Colonic mucosa (tissue), 4 donors: ENCODE measurements at regions of chr1 and their contacts with region 1.

Region 1: DNA sequence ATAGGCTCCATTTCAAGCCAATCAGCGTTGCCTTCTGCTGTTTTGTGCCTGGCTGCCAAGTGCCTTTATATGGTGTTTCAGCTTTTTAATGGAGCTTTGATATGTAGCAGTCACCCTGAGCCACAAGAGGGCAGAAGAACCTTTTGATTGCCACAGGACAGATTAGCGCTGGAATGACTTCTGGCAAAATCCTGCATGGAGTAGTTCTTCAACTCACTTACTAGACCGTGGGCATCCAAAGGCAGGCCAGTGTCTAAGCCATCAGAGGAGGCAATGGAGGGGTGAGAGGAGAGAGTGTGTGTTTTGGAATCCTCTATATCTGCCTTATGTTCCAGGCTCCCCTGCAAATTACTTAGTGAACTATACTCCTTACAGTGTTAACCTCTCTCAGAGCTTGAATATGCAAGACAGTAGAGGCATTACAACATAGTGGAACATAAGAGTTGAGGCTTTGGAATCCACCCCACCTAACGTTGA is 56.2 kb downstream of the ST3GAL3 start:
- DNase-seq: peak; percentile 80
- H3K4me3 ChIP-seq: no peak overlapping the region
- H3K27ac ChIP-seq: no peak overlapping the region
- H3K4me1 ChIP-seq: no peaks in the 10 kb centered on the region
- H3K27me3 ChIP-seq: no peaks in the 10 kb centered on the region
- CTCF ChIP-seq: peak; percentile 67

Region 2: DNA sequence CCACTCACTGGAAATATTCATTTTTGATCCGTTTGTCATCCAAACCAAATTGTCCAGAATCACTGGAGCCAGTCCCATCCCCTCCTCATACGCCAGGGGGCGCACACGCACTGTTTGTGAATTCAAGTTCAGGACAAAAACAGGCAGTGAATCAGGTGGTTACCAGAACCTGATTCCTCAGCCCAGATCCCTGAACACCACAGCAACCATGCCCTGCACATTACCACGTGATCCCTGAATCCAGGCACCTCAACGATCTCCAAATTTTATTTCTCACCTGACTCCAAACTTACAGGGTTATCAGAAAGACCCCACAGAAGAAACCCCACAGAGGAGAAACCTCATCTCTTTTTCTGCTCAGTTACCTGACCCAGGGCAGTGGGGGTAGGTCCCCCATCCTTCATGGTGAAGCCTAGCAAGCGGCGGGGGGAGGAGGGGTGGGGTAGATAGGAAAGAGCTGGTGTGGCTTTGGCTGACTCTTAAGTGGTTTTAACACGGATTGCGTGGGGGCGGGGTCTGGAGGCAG is 234.3 kb before region 1 on chr1:
- intact Hi-C with region 1: loop called (anchors 5 kb)
- DNase-seq: peak; percentile 93
- H3K4me3 ChIP-seq: no peak overlapping the region
- H3K27ac ChIP-seq: no peak overlapping the region
- H3K4me1 ChIP-seq: peaks cover 3% of the 10 kb centered on the region
- H3K27me3 ChIP-seq: no peaks in the 10 kb centered on the region
- CTCF ChIP-seq: peak; percentile 98

Region 3: DNA sequence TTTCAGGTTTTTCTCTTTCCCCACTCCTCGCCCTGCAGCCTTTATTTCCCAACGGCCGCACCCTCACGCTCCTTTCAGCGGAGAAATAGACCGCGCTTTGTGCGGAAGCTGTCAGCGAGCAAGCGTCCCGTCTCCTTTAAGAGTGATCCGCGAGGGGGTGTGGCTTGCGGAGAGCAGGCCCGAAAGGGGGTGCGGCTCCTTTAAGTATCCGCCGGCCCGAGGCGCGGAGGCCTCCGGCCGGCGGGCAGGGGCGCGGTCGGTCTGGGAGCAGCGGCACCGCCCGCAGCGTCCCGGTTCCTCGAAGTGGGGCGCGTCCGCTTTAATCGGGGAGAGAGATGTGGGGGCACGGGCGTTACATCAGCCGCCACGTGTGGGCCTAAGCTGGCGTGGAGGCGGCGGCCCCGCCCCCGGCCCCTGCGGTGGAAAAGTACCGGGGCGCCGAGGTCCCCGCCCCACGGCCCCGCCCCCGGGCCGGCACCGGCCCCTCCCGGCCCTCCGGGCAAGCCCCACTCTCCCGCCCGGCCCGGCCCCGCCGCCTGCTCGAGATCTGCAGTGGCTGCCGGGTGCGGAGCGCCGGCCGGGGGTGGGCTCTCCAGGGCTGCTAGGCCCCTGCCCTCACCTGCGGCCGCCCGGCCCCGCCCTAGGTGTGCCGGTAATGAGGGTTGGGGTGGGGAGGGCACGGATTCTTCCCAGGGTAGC is 266.5 kb after region 1 on chr1:
- intact Hi-C with region 1: loop called (anchors 10 kb)
- DNase-seq: peak; percentile 96
- H3K4me3 ChIP-seq: peak overlapping the region; percentile 84
- H3K27ac ChIP-seq: peak overlapping the region; percentile 91
- H3K4me1 ChIP-seq: peaks cover 22% of the 10 kb centered on the region
- H3K27me3 ChIP-seq: no peaks in the 10 kb centered on the region
- CTCF ChIP-seq: no peak

Region 4: DNA sequence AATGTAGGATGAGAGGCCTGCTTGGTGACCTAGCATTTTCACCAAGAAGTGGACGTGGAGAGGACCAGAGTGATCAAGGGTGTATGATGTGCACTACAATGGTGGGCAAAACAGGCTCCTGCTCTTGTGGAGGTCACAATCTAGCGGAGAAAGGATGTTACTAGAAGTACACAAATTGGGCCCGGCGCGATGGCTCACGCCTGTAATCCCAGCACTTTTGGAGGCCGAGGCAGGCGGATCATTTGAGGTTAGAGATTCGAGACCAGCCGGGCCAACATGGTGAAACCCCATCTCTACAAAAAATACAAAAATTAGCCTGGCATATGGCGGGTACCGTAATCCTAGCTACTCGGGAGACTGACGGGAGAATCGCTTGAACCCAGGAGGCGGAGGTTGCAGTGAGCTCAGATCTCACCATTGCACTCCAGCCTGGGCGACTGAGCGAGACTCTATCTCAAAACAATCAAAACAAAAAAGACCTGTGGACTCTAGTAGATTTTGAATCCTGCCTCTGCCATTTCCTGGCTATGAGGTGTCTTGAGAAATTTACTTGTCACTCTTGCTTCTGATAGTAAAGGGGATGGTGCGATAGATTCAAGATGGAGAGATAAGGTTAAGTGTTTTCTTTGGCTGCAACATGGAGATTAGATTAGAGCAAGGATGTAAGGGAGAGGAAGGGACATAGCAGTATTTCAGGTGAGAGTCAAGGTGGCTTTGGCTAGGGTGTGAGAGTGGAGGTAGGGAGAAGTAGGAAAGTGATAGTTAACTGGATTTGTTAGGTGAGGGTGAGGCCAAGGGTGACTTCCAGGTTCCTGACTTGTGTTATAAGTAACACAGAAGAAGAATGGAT is 370.8 kb after region 1 on chr1:
- intact Hi-C with region 1: no loop called
- DNase-seq: no peak
- H3K4me3 ChIP-seq: no peak overlapping the region
- H3K27ac ChIP-seq: no peak overlapping the region
- H3K4me1 ChIP-seq: no peaks in the 10 kb centered on the region
- H3K27me3 ChIP-seq: no peaks in the 10 kb centered on the region
- CTCF ChIP-seq: no peak